Natural killer cell (primary cell): ENCODE measurements at regions of chr6 and their contacts with region 1.

Region 1: DNA sequence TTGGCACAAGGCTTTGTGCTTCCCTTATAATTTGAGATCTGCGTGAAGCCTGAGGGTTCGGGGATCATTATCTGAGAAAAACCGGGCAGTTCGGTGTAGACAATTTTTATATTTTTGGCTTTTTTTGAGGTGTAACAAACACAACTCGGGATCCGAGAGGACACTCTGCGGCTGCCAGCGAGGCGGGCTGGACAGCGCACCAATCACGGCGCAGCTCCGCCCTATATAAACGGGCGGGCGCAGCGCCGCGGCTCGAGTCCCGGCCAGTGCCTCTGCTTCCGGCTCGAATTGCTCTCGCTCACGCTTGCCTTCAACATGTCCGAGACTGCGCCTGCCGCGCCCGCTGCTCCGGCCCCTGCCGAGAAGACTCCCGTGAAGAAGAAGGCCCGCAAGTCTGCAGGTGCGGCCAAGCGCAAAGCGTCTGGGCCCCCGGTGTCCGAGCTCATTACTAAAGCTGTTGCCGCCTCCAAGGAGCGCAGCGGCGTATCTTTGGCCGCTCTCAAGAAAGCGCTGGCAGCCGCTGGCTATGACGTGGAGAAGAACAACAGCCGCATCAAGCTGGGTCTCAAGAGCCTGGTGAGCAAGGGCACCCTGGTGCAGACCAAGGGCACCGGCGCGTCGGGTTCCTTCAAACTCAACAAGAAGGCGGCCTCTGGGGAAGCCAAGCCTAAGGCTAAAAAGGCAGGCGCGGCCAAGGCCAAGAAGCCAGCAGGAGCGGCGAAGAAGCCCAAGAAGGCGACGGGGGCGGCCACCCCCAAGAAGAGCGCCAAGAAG is 69.0 kb downstream of the HFE start:
- DNase-seq: peak; percentile 92 to 93
- ATAC-seq: peak; percentile 48 to 72 (median 58)
- H3K4me3 ChIP-seq: peak overlapping the region; percentile 65
- H3K4me3 Mint-ChIP-seq: peak overlapping the region; percentile 99
- H3K27ac ChIP-seq: peak overlapping the region; percentile 87
- H3K27ac Mint-ChIP-seq: peak overlapping the region; percentile 92 to 97
- H3K4me1 ChIP-seq: peaks cover 29% of the 10 kb centered on the region
- H3K4me1 Mint-ChIP-seq: peaks cover 56% of the 10 kb centered on the region in 2 donors
- H3K27me3 ChIP-seq: no peaks in the 10 kb centered on the region
- H3K27me3 Mint-ChIP-seq: no peaks in the 10 kb centered on the region
- CTCF ChIP-seq: no peak

Region 2: DNA sequence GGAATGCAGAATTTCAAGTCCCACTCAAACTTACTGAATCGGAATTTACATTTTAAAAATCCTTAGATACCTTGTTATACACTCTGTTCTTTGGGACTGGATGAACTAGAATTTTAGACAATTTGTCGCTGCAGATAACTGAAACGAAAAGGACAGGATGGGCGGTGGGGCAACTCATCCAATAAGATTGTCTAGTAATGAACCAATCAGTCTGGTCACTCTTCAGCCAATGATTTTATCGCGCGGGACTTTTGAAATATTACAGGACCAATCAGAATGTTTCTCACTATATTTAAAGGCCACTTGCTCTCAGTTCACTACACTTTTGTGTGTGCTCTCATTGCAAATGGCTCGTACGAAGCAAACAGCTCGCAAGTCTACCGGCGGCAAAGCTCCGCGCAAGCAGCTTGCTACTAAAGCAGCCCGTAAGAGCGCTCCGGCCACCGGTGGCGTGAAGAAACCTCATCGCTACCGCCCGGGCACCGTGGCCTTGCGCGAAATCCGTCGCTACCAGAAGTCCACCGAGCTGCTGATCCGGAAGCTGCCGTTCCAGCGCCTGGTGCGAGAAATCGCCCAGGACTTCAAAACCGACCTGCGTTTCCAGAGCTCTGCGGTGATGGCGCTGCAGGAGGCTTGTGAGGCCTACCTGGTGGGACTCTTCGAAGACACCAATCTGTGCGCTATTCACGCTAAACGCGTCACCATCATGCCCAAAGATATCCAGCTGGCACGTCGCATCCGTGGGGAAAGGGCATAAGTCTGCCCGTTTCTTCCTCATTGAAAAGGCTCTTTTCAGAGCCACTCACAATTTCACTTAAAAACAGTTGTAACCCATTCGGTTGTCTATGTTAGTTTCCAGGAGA is 111.0 kb before region 1 on chr6:
- intact Hi-C with region 1: loop called (anchors 1 kb)
- DNase-seq: peak; percentile 64 to 92
- ATAC-seq: peak; percentile 52 to 73 (median 64)
- H3K4me3 ChIP-seq: peak overlapping the region; percentile 64
- H3K4me3 Mint-ChIP-seq: peak overlapping the region; percentile 95
- H3K27ac ChIP-seq: peak overlapping the region; percentile 91
- H3K27ac Mint-ChIP-seq: peak overlapping the region; percentile 97 to 98
- H3K4me1 ChIP-seq: peaks cover 26% of the 10 kb centered on the region
- H3K4me1 Mint-ChIP-seq: peaks cover 25 to 28% of the 10 kb centered on the region in 2 donors
- H3K27me3 ChIP-seq: no peaks in the 10 kb centered on the region
- H3K27me3 Mint-ChIP-seq: no peaks in the 10 kb centered on the region
- CTCF ChIP-seq: no peak

Region 3: GRCh38 chr6:26122793-26123674 is 33.2 kb before region 1 on chr6:
- intact Hi-C with region 1: loop called (anchors 1 kb)
- DNase-seq: peak; percentile 75 to 98
- ATAC-seq: peak; percentile 54 to 76 (median 63)
- H3K4me3 ChIP-seq: peak overlapping the region; percentile 82
- H3K4me3 Mint-ChIP-seq: peak overlapping the region; percentile 99
- H3K27ac ChIP-seq: peak overlapping the region; percentile 97
- H3K27ac Mint-ChIP-seq: peak overlapping the region; percentile 98 to 100
- H3K4me1 ChIP-seq: peaks cover 26% of the 10 kb centered on the region
- H3K4me1 Mint-ChIP-seq: peaks cover 42 to 52% of the 10 kb centered on the region in 2 donors
- H3K27me3 ChIP-seq: no peaks in the 10 kb centered on the region
- H3K27me3 Mint-ChIP-seq: no peaks in the 10 kb centered on the region
- CTCF ChIP-seq: no peak

Region 4: GRCh38 chr6:26196846-26197648 is 40.8 kb after region 1 on chr6:
- intact Hi-C with region 1: loop called (anchors 1 kb)
- DNase-seq: peak; percentile 65 to 94
- ATAC-seq: peak; percentile 53 to 73 (median 62)
- H3K4me3 ChIP-seq: peak overlapping the region; percentile 92
- H3K4me3 Mint-ChIP-seq: peak overlapping the region; percentile 96
- H3K27ac ChIP-seq: peak overlapping the region; percentile 94
- H3K27ac Mint-ChIP-seq: peak overlapping the region; percentile 98 to 99
- H3K4me1 ChIP-seq: peaks cover 26% of the 10 kb centered on the region
- H3K4me1 Mint-ChIP-seq: peaks cover 45 to 51% of the 10 kb centered on the region in 2 donors
- H3K27me3 ChIP-seq: no peaks in the 10 kb centered on the region
- H3K27me3 Mint-ChIP-seq: no peaks in the 10 kb centered on the region
- CTCF ChIP-seq: no peak

Region 5: DNA sequence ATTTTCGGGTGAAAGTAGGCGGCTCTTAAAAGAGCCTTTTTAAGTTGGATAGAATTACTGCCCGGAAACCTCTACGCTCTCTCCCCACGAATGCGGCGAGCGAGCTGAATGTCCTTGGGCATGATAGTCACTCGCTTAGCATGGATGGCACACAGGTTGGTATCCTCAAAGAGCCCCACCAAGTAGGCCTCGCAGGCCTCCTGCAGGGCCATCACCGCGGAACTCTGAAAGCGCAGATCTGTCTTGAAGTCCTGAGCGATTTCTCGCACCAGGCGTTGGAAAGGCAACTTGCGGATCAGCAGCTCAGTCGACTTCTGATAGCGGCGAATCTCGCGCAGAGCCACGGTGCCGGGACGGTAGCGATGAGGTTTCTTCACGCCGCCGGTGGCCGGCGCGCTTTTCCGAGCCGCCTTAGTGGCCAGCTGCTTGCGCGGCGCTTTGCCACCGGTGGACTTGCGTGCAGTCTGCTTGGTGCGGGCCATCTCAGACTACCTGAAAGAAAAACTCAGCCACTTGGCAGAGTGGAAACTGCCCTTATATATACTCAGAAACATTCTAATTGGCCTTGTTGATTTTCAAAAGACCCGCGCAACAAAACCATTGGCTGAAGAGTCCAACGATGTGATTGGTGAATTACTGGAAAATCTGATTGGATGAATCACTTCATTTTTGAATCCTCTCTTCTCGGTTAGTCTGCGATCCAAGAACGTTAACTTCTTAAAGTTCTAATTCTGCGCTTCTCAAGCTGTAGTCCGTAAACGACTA is 114.8 kb after region 1 on chr6:
- intact Hi-C with region 1: loop called (anchors 2 kb)
- DNase-seq: peak; percentile 78 to 92
- ATAC-seq: peak in 2 of 3 donors; percentile 17 to 20
- H3K4me3 ChIP-seq: peak overlapping the region; percentile 62
- H3K4me3 Mint-ChIP-seq: no peak overlapping the region
- H3K27ac ChIP-seq: peak overlapping the region; percentile 92
- H3K27ac Mint-ChIP-seq: no peak overlapping the region
- H3K4me1 ChIP-seq: peaks cover 30% of the 10 kb centered on the region
- H3K4me1 Mint-ChIP-seq: peaks cover 14 to 21% of the 10 kb centered on the region in 2 donors
- H3K27me3 ChIP-seq: no peaks in the 10 kb centered on the region
- H3K27me3 Mint-ChIP-seq: no peaks in the 10 kb centered on the region
- CTCF ChIP-seq: no peak

Region 6: GRCh38 chr6:27146706-27147505 is 990.6 kb after region 1 on chr6:
- intact Hi-C with region 1: loop called (anchors 5 kb)
- DNase-seq: peak; percentile 74 to 97
- ATAC-seq: peak; percentile 76 to 88 (median 82)
- H3K4me3 ChIP-seq: peak overlapping the region; percentile 74
- H3K4me3 Mint-ChIP-seq: no peak overlapping the region
- H3K27ac ChIP-seq: peak overlapping the region; percentile 88
- H3K27ac Mint-ChIP-seq: no peak overlapping the region
- H3K4me1 ChIP-seq: peaks cover 23% of the 10 kb centered on the region
- H3K4me1 Mint-ChIP-seq: peaks cover 0 to 3% of the 10 kb centered on the region in 2 donors
- H3K27me3 ChIP-seq: no peaks in the 10 kb centered on the region
- H3K27me3 Mint-ChIP-seq: no peaks in the 10 kb centered on the region
- CTCF ChIP-seq: no peak